Activated T-helper 1 cell treated with anti-CD3 and anti-CD28 coated beads, Interleukin-12 subunit alpha, Interleukin-12 subunit beta, Interleukin-2, Interleukin-4 antibody, amounts not matched to agents 30 ng/mL and 10 ng/mL and 1 ng/mL, durations not matched to agents 14 hours and 24 hours and 36 hours (primary cell): ENCODE measurements at regions of chr3 and their contacts with region 1.

Region 1: DNA sequence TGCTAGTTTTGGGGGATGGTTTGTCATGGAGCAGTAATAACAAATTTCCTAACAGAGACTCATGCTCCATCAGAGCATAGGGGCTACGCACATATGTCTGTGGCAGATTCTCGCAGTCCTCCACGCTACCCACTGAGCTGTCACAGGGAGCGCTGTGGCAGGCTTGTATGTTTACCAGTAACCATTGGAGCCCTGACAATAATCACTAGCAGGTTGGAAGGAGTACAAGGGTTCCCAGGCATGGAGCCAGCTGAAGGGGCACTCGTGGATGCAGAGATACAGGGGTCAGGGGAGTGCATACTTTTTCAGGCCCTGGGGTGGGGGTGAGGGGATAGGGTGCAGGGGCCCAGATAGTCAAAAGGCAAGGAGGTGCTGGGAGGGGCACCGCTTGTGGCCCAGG is 7.9 kb upstream of the GP9 start:
- DNase-seq: no peak
- H3K4me3 Mint-ChIP-seq: no peak overlapping the region
- H3K27ac Mint-ChIP-seq: no peak overlapping the region
- H3K4me1 Mint-ChIP-seq: peaks cover 9% of the 10 kb centered on the region
- H3K27me3 Mint-ChIP-seq: peaks cover 14% of the 10 kb centered on the region

Region 2: GRCh38 chr3:128969993-128970739 is 82.5 kb before region 1 on chr3:
- intact Hi-C with region 1: loop called (anchors 1 kb)
- DNase-seq: peak; percentile 52
- H3K4me3 Mint-ChIP-seq: no peak overlapping the region
- H3K27ac Mint-ChIP-seq: no peak overlapping the region
- H3K4me1 Mint-ChIP-seq: peaks cover 10% of the 10 kb centered on the region
- H3K27me3 Mint-ChIP-seq: peaks cover 9% of the 10 kb centered on the region

Region 3: DNA sequence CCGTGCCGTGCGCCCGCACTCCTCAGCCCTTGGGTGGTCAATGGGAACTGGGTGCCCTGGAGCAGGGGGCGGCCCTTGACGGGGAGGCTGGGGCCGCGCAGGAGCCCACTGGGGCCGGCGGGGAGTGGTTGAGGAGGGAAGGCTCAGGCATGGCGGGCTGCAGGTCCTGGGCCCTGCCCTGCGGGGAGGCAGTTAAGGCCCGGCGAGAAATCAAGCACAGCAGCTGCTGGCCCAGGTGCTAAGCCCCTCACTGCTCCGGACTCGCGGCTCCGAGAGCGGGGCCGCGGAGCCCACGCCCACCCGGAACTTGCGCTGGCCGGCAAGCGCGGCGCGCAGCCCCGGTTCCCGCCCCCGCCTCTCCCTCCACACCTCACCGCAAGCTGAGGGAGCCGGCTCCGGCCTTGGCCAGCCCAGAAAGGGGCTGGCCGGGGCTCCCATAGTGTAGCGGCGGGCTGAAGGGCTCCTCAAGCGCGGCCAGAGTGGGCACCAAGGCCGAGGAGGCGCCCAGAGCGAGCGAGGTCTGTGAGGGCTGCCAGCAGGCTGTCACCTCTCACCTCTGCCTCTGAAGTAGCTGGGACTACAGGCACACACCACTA is 15.7 kb after region 1 on chr3:
- intact Hi-C with region 1: loop called (anchors 1 kb)
- DNase-seq: no peak
- H3K4me3 Mint-ChIP-seq: peak overlapping the region; percentile 67
- H3K27ac Mint-ChIP-seq: no peak overlapping the region
- H3K4me1 Mint-ChIP-seq: peaks cover 5% of the 10 kb centered on the region
- H3K27me3 Mint-ChIP-seq: peaks cover 11% of the 10 kb centered on the region